ENCODE measurements at regions of chr2 and their contacts with region 1.

Region 1: GRCh38 chr2:239934571-239935171 is 90.5 kb downstream of the NDUFA10 start:
- DNase-seq: peak; percentile 40
- H3K4me3 ChIP-seq: no peak overlapping the region
- H3K27ac ChIP-seq: no peak overlapping the region
- H3K4me1 ChIP-seq: no peaks in the 10 kb centered on the region
- H3K27me3 ChIP-seq: no peaks in the 10 kb centered on the region
- CTCF ChIP-seq: peak; percentile 60 to 70
- POLR2A ChIP-seq: no peak

Region 2: GRCh38 chr2:239920693-239921365 is 13.8 kb before region 1 on chr2:
- CTCF ChIA-PET with region 1: interaction called, 10 read pairs
- POLR2A ChIA-PET with region 1: no interaction called
- dilution Hi-C with region 1: no loop called
- intact Hi-C with region 1: no loop called
- DNase-seq: no peak
- H3K4me3 ChIP-seq: no peak overlapping the region
- H3K27ac ChIP-seq: no peak overlapping the region
- H3K4me1 ChIP-seq: no peaks in the 10 kb centered on the region
- H3K27me3 ChIP-seq: no peaks in the 10 kb centered on the region
- CTCF ChIP-seq: no peak
- POLR2A ChIP-seq: no peak

Region 3: DNA sequence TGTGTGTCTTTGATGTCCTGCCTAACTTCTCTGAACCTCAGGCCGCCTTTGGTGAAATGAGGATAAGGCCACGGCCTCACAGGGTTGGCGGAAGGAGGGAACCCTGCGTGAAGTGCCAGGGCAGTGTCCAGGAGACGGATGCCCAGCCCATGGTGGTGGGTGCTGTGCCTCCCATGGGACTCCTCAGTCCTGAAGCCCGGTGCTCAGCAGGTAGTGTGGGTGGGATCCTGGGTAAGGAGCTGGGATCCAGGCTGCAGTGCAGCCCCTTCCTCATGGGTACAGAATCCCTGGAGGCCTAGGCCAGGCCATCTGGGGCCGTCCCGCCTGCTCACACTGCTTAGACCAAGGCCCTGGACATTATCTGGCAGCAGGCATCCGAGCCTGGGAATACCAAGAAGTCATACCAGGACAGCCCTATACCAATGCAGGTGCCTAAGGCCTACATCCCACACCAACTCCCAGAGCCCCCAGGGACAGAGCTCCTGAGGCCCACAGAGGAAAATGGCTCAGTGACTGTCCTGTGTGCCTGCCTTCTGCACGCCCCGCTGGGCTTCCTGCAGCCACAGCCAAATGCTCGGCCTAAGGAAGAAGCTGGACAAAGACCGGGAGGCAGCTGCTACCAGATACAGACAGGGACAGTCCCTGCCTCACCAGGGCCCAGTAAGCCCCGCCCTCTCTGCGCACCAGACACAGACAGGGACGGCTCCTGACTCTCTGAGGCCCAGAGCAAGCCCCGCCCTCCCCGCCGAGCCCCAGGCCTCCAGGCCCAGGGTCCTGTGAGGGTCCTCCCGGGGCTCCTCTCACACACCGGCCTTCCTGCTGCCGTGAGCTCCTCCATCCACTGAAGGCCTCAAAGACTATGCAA is 12.4 kb after region 1 on chr2:
- CTCF ChIA-PET with region 1: interaction called, 15 read pairs
- POLR2A ChIA-PET with region 1: no interaction called
- dilution Hi-C with region 1: no loop called
- intact Hi-C with region 1: no loop called
- DNase-seq: no peak
- H3K4me3 ChIP-seq: no peak overlapping the region
- H3K27ac ChIP-seq: no peak overlapping the region
- H3K4me1 ChIP-seq: no peaks in the 10 kb centered on the region
- H3K27me3 ChIP-seq: no peaks in the 10 kb centered on the region
- CTCF ChIP-seq: no peak
- POLR2A ChIP-seq: no peak

Region 4: DNA sequence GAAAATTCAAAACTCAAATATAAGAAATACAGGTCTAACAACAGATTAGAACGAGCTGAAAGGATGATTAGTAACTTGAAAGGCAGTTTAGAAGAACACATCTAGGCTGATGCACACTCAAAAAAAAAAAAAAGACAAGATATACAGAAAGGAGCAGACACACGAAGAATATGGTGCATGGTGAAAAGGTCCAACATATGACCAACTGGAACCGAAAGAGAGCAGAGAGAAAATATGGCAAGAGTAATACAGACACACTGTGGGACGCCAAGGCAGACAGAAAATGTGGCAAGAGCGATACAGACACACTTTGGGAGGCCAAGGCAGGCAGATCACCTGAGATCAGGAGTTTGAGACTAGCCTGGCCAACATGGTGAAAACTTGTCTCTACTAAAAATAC is 50.7 kb after region 1 on chr2:
- CTCF ChIA-PET with region 1: no interaction called
- POLR2A ChIA-PET with region 1: no interaction called
- dilution Hi-C with region 1: no loop called
- intact Hi-C with region 1: no loop called
- DNase-seq: no peak
- H3K4me3 ChIP-seq: no peak overlapping the region
- H3K27ac ChIP-seq: no peak overlapping the region
- H3K4me1 ChIP-seq: no peaks in the 10 kb centered on the region
- H3K27me3 ChIP-seq: no peaks in the 10 kb centered on the region
- CTCF ChIP-seq: no peak
- POLR2A ChIP-seq: no peak

Measured in endothelial cell of umbilical vein (primary cell).